Activated CD4-positive, alpha-beta memory T cell treated with anti-CD3 and anti-CD28 coated beads, Interleukin-2, amount 10 ng/mL, durations not matched to agents 7 days and 5 days (primary cell): ENCODE measurements at regions of chr1 and their contacts with region 1.

Region 1: DNA sequence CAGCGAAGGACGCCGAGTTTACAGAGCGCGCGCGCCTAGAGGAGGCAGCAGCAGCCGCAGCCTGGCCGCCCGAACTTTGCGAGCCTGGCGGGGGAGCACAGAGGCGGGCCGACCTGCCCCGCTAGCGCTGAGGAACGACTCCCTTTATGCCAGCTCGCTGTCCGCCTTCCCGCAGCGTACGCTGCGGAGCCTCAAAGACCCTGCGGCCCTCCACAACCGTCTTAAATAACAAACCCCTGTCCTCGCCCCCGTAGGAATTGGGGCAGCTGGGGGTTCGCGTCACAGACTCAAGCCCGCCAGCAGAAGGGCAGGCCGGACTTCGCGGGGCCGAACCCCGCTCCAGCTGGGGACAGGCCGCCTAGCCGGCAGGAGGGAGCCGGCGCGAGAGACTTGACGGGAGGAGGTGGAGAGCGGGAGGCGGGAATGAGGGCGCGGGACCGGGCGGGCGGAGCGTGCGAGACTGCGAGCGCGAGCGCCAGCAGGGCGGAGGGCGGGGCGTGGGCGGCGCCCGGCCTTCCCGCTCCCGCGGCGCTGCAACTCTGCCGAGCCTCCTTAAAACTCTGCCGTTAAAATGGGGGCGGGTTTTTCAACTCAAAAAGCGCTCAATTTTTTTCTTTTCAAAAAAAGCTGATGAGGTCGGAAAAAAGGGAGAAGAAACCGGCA is 1.8 kb upstream of the CDKN2C start:
- DNase-seq: peak; percentile 87
- H3K4me3 Mint-ChIP-seq: peak overlapping the region; percentile 90
- H3K27ac Mint-ChIP-seq: peak overlapping the region; percentile 99
- H3K4me1 Mint-ChIP-seq: peaks cover 28% of the 10 kb centered on the region
- H3K27me3 Mint-ChIP-seq: peaks cover 15% of the 10 kb centered on the region

Region 2: GRCh38 chr1:50742523-50742922 is 225.8 kb before region 1 on chr1:
- CTCF ChIA-PET with region 1: no interaction called
- POLR2A ChIA-PET with region 1: no interaction called
- DNase-seq: no peak
- H3K4me3 Mint-ChIP-seq: no peak overlapping the region
- H3K27ac Mint-ChIP-seq: no peak overlapping the region
- H3K4me1 Mint-ChIP-seq: no peaks in the 10 kb centered on the region
- H3K27me3 Mint-ChIP-seq: no peaks in the 10 kb centered on the region

Region 3: GRCh38 chr1:50929376-50929958 is 38.8 kb before region 1 on chr1:
- CTCF ChIA-PET with region 1: interaction called, 12 read pairs
- POLR2A ChIA-PET with region 1: interaction called, 4 read pairs
- DNase-seq: no peak
- H3K4me3 Mint-ChIP-seq: no peak overlapping the region
- H3K27ac Mint-ChIP-seq: no peak overlapping the region
- H3K4me1 Mint-ChIP-seq: peaks cover 16% of the 10 kb centered on the region
- H3K27me3 Mint-ChIP-seq: no peaks in the 10 kb centered on the region

Region 4: GRCh38 chr1:50978144-50978851 is 10.0 kb after region 1 on chr1:
- CTCF ChIA-PET with region 1: interaction called, 25 read pairs
- POLR2A ChIA-PET with region 1: interaction called, 125 read pairs
- DNase-seq: peak; percentile 24
- H3K4me3 Mint-ChIP-seq: peak overlapping the region; percentile 76
- H3K27ac Mint-ChIP-seq: peak overlapping the region; percentile 58
- H3K4me1 Mint-ChIP-seq: peaks cover 28% of the 10 kb centered on the region
- H3K27me3 Mint-ChIP-seq: peaks cover 63% of the 10 kb centered on the region

Region 5: DNA sequence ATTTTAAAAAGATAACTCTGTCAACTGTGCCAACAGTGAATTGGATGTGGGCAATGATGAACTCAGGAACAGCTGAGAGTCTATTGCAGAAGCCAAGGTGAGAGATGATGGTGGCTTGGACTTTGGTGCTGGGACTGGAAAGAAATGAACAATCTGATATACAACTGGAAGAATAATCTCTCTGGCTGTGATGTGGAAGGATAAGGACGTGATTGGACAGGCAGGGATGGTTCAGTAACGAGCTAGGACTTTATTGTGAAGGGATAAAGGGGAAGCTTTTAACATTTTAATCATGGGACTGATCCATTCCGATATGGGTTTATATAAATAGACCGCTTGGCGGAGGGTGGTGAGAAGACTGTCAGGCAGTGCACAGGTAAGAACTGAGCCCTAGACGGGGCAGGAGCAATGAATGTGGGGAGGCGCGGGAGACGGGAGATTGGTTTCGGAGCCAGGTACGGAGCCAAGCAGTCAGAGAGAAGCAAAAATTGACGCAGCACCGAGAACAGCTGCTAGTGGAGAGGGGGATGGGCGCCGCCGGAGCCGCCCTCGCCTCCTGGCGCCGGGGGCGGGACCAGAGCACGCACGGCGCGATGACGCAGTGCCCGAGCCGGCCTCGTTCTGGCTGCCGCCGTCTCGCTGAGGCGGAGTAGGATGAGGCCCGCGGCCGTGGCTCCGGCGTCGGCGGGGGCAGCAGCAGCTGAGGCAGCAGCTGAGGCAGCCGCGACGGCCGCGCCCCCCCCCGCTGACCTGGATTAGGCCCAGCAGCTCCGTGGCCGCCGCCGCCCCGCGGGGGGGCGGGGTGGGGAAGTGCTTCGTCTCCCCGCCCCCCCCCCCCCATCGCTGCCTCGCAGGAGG is 267.6 kb after region 1 on chr1 and contains the start of gene RNF11:
- CTCF ChIA-PET with region 1: interaction called, 3 read pairs
- POLR2A ChIA-PET with region 1: interaction called, 17 read pairs
- DNase-seq: peak; percentile 93
- H3K4me3 Mint-ChIP-seq: peak within 1 kb of the TSS; percentile 97
- H3K27ac Mint-ChIP-seq: peak within 1 kb of the TSS; percentile 87
- H3K4me1 Mint-ChIP-seq: peaks cover 31% of the 10 kb centered on the region
- H3K27me3 Mint-ChIP-seq: no peaks in the 10 kb centered on the region
- total RNA-seq, gene RNF11: 34.8 to 39.7 TPM